ENCODE measurements at regions of chr16 and their contacts with region 1.

Region 1: DNA sequence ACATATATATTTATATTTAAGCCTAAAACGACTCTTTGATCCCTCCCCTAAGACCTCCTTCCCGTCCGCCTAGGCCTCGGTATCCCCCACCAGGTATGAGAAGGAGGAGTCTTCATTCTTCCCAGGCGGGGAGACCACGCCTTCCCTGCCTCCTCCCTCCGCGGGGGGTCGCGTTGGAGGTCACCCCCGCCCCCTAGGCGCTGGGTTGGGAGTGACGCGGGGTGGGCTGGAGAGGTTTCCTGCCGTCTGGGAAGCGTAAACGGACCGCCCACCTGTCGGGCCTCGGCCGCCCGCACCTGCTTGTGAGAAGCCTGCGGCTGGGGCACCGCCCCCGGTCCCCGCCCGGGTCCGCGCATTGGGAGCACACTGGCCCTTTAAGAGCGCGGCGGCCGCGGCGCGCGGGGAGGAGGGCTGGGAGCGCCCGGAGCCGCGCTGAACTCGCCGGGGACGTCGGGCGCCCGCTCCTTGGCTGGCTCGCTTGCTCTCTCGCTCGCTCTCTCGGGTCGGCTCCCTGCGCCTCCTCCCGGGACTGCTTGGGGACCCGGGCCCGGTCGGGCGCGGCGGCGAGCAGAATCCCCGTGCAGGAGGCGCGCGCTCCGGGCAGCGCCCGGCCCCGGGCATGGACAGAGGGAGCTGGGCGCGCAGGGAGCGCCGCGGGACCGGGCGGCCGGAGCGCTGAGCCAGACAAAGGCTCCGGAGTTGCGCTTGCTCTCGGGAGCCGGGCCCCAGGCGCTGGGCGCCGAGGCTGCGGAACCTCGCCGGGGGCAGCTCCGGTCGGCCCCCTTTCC is at the start of gene MMP15:
- DNase-seq: peak; percentile 95
- ATAC-seq: peak; percentile 61
- total RNA-seq, gene MMP15: 113 to 127 TPM

Region 2: GRCh38 chr16:58129097-58129936 is 103.8 kb after region 1 on chr16 and contains the start of gene CFAP20:
- intact Hi-C with region 1: loop called (anchors 2 to 10 kb)
- DNase-seq: peak; percentile 99 to 100
- ATAC-seq: peak; percentile 94
- total RNA-seq, gene CFAP20: 18.1 to 20.9 TPM

Region 3: DNA sequence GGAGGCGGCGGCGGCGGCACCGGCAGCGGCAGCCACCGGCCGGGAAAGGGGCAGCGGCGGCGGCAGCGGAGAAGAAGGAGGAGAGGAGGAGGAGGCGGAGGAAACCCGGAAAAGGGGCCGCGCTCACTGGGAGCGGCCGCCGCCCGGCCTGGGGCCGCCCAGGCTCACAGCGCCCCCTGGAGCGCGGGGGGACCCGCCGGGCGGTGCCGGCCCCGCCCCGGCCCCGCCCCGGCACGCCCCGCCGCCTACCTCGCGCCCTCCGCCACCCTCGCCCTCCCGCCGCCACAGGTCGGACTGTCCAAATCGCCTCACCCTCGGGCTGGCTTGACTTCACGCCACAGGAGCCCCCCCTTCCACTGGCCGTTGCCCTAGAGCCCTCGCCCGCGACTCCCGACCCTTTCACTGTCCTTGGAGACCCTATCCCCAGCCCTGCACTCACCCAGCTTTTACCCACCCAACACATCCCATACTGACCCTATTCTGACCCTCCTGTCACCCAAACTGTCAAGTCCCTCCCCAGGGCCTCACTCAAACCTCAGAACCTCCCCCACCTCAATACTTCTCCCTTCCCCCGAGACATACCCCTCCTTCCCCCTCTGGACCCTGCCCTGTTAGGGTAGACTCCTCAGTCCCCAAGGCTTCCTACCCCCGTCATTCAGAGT is 172.6 kb after region 1 on chr16 and contains the start of gene CSNK2A2:
- intact Hi-C with region 1: loop called in 1 of 2 experiments (anchors 10 kb)
- DNase-seq: peak; percentile 69 to 80
- ATAC-seq: peak; percentile 96
- total RNA-seq, gene CSNK2A2: 47.5 to 53.8 TPM

Region 4: DNA sequence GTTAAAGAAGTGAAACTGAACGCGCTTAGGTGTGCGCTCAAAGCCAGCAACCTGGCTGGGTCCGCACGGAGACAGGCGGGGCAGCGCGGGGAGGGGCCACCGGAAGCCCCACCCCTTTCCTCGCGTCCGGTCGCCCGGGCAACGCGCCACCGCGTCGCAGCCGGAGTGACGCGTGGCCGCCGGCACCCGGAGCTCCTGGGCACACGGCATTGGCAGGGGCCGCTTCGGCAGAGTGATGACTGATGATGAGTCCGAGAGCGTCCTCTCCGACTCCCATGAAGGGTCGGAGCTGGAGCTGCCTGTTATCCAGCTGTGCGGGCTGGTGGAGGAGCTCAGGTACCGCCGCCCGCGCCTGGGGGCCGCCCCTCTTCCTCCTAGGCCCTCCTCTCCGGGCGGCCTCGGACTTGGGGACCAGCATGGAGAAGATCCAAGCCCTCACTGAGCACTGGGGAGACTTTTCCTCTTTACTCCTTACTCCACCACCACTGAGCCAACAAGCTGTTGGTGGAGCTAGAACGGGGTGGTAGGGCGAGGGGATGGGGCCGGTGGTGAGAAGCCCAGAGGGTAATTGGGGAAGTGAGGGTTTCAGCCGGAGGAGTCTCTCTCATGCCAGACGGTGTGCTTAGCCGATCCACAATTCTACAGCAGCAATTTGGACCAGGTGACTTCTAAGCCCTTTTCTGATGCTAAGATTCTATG is 224.4 kb after region 1 on chr16:
- intact Hi-C with region 1: loop called in 1 of 2 experiments (anchors 10 kb)
- DNase-seq: peak; percentile 59 to 87
- ATAC-seq: peak; percentile 100

Region 5: GRCh38 chr16:58259995-58260394 is 234.4 kb after region 1 on chr16:
- intact Hi-C with region 1: no loop called
- DNase-seq: no peak
- ATAC-seq: no peak

Region 6: GRCh38 chr16:58336332-58337089 is 311.0 kb after region 1 on chr16:
- intact Hi-C with region 1: no loop called
- DNase-seq: peak; percentile 62 to 89
- ATAC-seq: peak; percentile 95